ENCODE measurements at regions of chr10 and their contacts with region 1.

Region 1: GRCh38 chr10:100364735-100365391 is 17.8 kb downstream of the SCD start:
- DNase-seq: peak; percentile 86 to 96
- ATAC-seq: peak; percentile 98 to 99
- H3K4me3 ChIP-seq: no peak overlapping the region
- H3K27ac ChIP-seq: peak overlapping the region; percentile 66 to 74 (median 70)
- H3K4me1 ChIP-seq: peaks cover 16 to 17% of the 10 kb centered on the region in 2 donors
- H3K27me3 ChIP-seq: no peaks in the 10 kb centered on the region
- CTCF ChIP-seq: peak in 1 of 5 experiments; percentile 17
- POLR2A ChIP-seq: peak in 1 of 2 donors; percentile 34

Region 2: DNA sequence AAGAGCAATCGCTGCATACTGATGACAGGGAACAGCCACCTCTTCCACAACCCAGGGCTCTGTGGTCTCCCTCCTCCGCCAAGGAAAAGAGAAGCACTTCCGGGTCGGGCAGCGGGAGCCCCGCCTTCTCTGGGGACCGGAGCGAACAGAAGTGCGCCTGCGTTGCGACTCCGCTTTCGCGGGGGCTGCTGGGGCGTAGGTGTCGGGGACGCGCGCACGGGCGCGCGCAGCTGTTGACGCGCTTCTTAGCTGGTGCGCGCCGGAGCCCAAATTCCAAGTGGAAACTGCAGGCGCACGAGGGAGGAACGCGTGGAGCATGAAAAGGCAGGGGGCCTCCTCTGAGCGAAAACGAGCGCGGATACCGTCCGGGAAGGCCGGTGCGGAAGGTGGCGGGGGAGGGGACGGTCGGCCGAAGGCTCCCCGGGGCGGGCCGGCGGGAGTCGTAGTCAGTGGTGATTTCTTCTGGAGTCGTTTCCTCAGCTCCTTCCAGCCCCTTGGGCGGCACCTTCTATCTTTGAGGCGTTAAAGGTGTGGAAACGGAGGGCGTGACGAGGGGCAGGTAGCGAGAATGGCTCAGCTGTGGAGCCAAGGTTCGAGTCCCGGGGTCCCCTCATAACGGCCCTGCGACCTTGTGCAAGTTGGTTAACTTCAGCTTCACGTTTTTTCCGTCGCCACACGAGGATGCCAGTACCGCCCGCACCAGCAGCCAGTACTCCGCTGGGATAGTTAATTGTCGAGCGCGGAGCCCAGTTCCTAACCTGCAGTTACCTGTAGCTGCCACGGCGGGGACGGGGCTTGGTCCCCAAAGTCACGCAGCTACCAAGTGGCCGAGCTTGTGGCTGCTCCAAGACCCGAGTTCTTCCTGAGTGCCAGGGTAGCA is 632.6 kb before region 1 on chr10 and contains the starts of genes COX15 and CUTC:
- in situ Hi-C with region 1: no loop called
- intact Hi-C with region 1: loop called (anchors 10 kb)
- DNase-seq: peak; percentile 96 to 98
- ATAC-seq: peak; percentile 82 to 83
- H3K4me3 ChIP-seq: peak within 1 kb of the TSS; percentile 82 to 100 (median 97)
- H3K27ac ChIP-seq: peak within 1 kb of the TSS; percentile 95 to 99 (median 99)
- H3K4me1 ChIP-seq: peaks cover 53 to 54% of the 10 kb centered on the region in 2 donors
- H3K27me3 ChIP-seq: no peaks in the 10 kb centered on the region
- CTCF ChIP-seq: peak; percentile 43 to 66 (median 51)
- POLR2A ChIP-seq: peak; percentile 93 to 94
- total RNA-seq, gene COX15: 28.1 to 45.3 (median 32.5) TPM
- total RNA-seq, gene CUTC: 85.2 to 172 (median 126) TPM

Region 3: DNA sequence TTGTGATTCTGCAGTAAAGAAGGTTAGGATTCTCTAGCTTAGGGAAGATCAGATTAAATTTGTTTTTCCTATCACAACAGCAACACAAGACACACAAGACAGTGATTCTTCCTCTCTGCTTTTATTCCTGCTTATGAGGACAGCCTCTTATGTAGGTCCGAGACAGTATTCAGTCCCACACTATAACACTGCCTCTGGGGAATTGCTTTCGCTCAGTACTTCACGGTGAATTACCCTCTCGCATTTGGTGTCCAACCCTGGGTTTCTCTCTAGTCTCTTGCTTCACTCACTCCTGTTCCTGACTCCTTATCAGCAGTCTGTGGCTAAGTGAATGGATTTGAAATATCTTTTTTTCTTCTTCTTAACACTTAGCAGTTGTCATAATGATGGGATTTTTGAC is 172.6 kb after region 1 on chr10:
- in situ Hi-C with region 1: no loop called
- intact Hi-C with region 1: no loop called
- DNase-seq: no peak
- ATAC-seq: no peak
- H3K4me3 ChIP-seq: no peak overlapping the region
- H3K27ac ChIP-seq: no peak overlapping the region
- H3K4me1 ChIP-seq: peaks cover 20 to 31% of the 10 kb centered on the region in 2 donors
- H3K27me3 ChIP-seq: no peaks in the 10 kb centered on the region
- CTCF ChIP-seq: no peak
- POLR2A ChIP-seq: no peak

Region 4: DNA sequence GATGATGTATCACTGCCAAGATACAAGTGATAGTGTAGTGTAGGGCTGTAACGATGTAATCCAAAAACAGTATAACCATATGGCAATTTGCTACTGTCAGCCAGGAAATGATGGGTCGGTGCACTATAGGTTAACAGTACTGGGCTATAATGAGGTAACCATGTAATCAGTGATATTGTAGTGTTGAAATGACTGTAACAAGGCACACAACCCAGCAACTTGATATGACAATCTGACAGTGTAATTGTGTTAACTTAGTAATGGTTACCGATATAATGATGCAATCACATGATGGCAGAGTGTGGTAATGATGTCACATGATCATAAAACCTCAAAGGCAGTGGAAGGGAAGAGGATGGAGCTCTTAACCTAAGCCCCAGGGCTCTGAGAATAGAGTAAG is 474.1 kb after region 1 on chr10:
- in situ Hi-C with region 1: no loop called
- intact Hi-C with region 1: no loop called
- DNase-seq: no peak
- ATAC-seq: no peak
- H3K4me3 ChIP-seq: no peak overlapping the region
- H3K27ac ChIP-seq: no peak overlapping the region
- H3K4me1 ChIP-seq: no peaks in the 10 kb centered on the region
- H3K27me3 ChIP-seq: peaks cover 20 to 42% (median 36%) of the 10 kb centered on the region in 3 donors
- CTCF ChIP-seq: no peak
- POLR2A ChIP-seq: no peak